ENCODE measurements at regions of chr4 and their contacts with region 1.

Region 1: DNA sequence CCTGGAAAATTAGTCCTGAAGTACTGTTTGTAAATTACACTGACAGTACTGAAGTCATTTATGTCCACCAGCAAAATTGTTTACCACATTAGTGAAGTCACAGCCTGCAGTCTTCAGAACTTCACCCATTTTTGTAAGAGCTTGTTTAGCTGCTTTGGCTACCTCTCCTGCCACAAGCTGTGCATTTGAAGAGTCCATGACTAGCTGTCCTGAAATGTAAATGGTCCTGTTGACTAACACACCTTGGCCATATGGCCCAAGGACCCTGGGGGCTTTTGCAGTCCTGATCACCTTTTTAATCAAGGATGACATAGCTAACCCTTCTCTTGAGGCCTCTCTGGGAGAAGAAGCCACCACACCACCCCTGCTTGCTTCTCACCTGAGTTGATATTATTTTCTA is 21.4 kb upstream of the ZNF518B start:
- DNase-seq: no peak
- H3K4me3 Mint-ChIP-seq: no peak overlapping the region
- H3K27ac Mint-ChIP-seq: no peak overlapping the region
- H3K4me1 Mint-ChIP-seq: no peaks in the 10 kb centered on the region
- H3K27me3 Mint-ChIP-seq: peaks cover 3% of the 10 kb centered on the region

Region 2: DNA sequence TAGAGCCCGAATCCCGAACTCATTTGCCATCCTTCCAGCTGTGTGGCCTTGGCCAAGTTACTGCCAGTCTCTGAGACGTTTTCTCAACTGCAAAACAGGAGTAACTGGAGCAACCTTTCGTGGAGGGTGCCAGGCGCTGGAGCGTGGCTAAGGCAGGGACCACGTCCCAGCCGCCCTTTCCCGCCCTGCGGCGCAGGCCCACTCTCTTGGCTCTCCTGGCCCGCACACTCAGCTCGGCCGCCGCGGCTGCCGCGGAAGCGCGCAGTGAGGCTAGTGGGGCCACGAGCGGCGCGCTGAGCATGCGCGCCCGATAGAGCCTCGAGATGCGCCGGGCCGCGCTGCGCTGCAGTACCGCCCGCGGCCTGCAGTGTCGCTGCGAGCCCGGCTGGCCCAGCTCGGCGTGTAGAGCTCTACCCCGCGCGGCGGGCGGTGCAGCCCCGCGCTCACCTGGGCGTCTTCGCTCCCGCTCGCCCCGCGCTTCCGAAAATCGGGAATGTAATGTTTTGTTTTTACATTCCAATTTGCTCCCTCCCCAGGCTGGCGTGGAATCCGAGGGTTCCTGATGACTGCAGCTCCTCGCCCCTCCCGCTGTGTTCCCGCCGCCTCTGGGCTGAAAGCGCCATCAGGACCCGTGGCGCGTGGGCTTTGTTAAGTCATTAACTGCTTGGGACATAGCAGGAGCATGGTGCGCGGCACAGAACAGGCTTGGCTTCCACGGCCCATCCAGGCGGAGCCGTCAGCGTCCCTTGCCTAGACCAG is 17.4 kb before region 1 on chr4:
- CTCF ChIA-PET with region 1: interaction called, 10 read pairs
- DNase-seq: peak; percentile 76
- H3K4me3 Mint-ChIP-seq: peak overlapping the region; percentile 65
- H3K27ac Mint-ChIP-seq: no peak overlapping the region
- H3K4me1 Mint-ChIP-seq: peaks cover 32% of the 10 kb centered on the region
- H3K27me3 Mint-ChIP-seq: peaks cover 50% of the 10 kb centered on the region

Region 3: DNA sequence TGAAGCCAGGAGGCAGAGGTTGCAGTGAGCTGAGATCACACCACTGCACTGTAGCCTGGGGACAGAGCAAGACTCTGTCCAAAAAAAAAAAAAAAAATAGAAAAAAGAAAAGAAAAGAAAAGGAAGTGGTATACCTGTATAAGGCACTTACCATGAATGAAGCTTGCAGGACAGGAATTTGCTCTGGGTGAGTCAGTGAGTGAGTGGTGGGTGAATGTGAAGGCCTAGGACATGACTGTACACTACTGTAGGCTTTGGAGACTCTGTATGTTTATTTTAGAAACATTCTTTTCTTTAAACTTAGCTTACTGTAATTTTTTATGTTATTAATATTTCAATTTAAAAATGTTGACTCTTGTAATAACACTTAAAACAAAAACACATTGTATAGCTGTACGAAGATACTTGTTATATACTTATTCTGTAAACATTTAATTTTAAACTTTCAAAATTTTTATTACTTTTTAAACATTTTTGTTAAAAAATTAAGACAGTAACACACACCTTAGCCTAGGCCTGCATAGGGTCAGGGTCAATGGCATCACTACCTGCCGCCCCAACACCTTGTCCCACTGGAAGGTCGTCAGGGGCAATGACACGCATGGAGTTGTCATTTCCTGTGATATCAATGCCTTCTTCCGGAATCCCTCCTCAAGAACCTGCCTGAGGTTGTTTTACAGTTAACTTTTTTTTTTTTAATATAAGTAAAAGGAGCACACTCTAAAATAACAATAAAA is 127.3 kb after region 1 on chr4:
- CTCF ChIA-PET with region 1: no interaction called
- DNase-seq: no peak
- H3K4me3 Mint-ChIP-seq: no peak overlapping the region
- H3K27ac Mint-ChIP-seq: no peak overlapping the region
- H3K4me1 Mint-ChIP-seq: no peaks in the 10 kb centered on the region
- H3K27me3 Mint-ChIP-seq: peaks cover 3% of the 10 kb centered on the region

Measured in activated naive CD4-positive, alpha-beta T cell treated with anti-CD3 and anti-CD28 coated beads, Interleukin-2, amount 10 ng/mL, durations not matched to agents 7 days and 5 days (primary cell).